Left cardiac atrium (tissue), 4 donors: ENCODE measurements at regions of chr1 and their contacts with region 1.

Region 1: GRCh38 chr1:117067533-117068370 is 7.6 kb downstream of the TTF2 start:
- DNase-seq: peak; percentile 48
- ATAC-seq: peak; percentile 87 to 90

Region 2: DNA sequence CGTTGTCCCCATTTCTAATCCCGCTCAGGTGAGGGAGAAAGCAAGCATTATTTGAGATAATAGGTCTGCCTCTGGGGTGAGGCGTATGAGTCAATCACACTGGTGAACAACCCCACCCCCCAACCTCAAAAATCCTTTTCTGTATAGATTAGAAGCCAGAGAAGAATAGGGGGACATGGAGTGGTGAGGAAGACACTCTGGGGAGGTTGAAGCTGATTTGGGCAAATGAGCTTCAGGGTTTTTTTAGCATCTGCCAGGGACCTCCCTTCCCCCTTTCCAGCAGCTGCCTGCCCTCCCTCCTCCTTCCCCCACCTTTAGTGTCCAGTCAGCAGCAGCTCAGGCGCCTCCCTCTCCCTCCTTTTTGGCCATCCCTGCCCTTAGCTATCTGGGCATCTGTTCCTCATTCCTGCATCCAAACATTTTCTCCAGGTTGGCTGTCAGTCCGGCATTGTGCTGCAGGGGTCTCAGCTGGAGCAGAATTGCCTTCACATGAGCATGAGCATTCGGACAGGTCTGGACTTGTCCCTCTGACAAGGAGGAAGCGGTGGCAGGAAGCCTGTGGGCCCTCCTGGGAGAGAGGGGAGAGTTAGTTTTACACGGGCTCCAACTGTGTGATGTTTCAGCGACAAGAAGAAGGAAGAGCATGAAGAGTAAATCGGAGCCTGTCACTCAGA is 188.8 kb before region 1 on chr1:
- intact Hi-C with region 1: no loop called
- DNase-seq: peak; percentile 33
- ATAC-seq: peak; percentile 31 to 52

Region 3: DNA sequence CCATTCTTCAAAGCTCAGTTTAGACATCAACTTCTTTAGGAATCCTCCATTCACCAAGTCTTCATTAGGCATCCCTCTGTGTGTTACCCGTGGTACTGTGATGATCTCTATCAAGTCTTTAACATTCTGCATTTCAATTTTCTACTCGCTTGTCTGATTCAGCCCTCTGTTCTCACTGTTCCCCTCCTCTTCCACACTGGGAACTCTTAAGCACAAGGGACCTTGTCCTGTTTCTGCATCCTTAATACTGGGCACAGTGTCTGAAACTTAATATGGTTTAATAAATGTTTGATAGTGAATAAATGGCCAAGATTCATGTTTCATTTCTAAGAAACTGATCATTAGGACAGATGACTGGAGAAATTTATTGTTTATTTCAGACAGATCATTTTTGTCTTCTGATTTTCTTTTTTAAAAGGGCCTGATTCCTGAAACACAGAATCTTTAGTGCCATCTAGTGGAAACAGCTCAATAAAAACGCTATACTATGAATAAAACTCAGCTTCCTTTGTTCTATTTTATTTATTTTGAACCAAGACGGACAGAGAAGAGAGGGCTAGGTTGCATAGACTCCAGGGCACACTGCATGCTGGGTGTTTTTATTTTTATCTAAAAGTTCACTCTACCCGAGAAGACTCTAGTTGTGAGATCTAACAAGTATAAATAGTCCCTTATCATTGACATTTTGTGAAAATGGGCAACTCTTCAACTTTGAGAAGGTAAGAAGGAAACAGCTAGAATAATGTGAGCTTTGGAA is 60.7 kb after region 1 on chr1:
- intact Hi-C with region 1: loop called in 1 of 2 experiments (anchors 5 kb)
- DNase-seq: no peak
- ATAC-seq: peak; percentile 81 to 88

Region 4: GRCh38 chr1:117150338-117150737 is 82.6 kb after region 1 on chr1:
- intact Hi-C with region 1: no loop called
- DNase-seq: no peak
- ATAC-seq: no peak

Region 5: DNA sequence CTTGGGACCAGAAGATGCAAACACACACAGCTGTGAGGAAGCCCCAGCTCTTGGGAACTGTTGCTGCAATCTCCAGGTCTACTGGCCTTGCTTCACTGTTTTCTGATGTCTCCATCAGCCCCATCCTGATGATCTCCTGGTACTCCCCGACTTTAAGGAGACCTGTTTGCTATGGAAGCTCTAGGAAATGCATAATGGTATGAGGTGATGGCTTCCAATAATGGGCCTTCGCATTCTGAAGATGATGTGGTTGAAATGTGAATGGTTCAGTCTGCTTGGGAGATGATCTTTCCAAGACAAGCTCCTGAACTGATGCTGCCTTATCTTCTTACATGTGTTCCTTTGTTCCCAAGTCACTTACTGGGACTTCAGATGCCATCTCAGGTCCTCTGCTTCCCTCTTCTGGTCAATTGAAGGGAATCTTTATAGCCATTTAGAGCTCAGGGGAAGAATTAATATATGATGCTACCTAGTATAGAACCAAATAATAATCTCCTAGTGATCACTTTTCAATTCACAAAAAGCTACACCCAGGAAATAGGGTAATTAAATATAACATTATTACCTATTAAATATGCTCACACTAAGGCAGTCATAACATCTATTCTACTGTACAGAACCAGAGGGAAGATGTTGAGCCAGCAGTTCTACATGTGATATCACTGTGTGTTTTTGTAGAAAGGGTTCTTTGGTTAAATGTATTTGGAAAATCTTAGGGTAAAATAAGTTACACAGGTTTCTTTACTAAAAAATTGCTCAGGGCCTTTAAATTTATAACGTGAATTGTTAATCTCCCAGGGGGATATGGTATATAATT is 216.9 kb after region 1 on chr1:
- intact Hi-C with region 1: loop called (anchors 1 to 2 kb)
- DNase-seq: no peak
- ATAC-seq: peak; percentile 72 to 90